ENCODE measurements at regions of chr2 and their contacts with region 1.

Region 1: DNA sequence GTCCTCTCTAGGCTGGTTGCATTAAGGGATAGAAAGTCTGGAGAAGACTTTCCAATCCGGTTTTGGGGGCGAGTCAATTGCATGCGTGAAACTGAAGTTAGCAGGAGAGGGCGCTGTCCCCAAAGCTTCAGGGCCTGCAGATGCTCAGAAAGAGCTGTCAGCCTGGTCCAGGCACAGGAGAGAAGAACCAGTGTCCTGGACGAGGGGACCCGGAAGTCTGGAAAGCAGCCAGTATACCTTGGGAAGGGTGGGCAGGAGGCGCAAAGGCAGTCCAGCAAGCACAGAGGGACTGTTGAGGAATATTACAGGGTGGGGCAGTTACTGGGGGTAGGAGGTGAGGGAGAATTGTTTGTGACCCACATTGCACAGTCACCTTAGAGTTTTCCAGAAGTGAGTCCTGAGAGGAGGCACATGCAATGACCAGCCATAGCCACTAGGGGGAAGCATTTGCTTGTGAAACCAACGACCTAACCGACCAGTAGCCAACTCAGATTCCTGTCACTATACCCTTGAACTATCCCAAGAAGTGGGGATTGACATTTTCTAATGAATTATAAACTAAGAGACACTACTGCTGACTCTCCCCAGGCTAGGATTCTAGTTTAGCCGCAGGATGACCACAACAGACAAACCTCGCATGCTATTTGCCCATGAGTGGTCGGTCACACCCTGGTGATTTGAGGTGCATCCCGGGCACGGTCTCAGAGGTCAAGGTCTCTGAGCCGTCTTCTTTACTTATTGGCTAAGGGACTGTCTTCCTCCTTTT is 172.8 kb downstream of the RDH14 start:
- DNase-seq: peak; percentile 62 to 91 (median 76)
- H3K4me3 ChIP-seq: no peak overlapping the region
- H3K27ac ChIP-seq: peak overlapping the region in 3 of 59 donors; percentile 21 to 69 (median 65)
- H3K27me3 ChIP-seq: peaks cover 0 to 3% (median 0%) of the 10 kb centered on the region in 45 donors
- CTCF ChIP-seq: peak; percentile 87 to 99 (median 95)

Region 2: GRCh38 chr2:18413676-18414396 is 26.2 kb after region 1 on chr2:
- intact Hi-C with region 1: no loop called
- DNase-seq: no peak
- H3K4me3 ChIP-seq: no peak overlapping the region
- H3K27ac ChIP-seq: no peak overlapping the region
- H3K27me3 ChIP-seq: peaks cover 0 to 5% (median 0%) of the 10 kb centered on the region in 45 donors
- CTCF ChIP-seq: no peak

Region 3: DNA sequence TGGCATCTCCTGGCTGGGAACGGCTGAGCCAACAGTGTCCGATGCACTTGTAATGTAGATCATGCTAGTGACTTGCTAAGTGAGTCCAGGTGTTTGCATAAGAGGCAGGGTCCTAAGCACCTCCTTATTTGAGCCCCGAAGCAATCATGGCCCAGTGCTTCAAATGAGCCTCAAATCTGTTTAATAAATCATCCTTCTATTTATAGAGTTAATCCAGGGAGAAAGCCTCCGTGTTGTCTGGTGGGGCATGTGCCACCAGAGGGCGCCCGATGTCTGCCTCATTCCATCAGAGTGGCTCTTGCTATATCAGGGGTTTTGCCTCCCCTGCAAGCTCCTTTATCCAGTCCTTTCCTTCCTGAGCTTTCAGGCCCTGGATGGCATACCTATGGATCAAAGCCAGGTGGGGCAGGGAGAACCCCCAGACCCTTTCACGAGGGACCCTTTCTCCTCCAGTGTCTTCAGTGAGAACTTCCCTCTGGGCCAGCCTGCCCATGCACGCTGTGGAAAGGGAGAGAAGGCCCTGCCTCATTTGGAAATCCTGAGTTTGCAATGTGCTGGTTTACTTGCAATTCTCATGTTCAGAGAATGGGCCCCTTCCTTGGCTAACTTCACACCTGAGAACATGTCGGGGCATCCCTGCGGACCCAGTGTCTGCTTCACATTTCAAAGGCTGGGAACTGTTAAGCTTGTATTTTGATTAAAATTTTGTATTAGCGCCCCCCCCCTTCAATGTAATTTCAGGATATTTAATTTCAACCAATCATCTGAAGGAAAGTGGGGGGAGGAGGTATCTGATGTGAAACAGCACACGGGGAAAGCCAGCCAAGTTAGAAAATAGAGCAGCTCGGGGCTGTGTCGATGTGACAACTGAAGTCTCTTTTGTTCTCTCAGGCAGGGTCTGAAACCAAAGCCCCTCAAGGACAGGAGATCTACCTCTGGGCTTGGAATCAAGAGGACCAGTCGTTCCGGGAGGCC is 133.1 kb after region 1 on chr2:
- intact Hi-C with region 1: loop called in 1 of 2 experiments (anchors 2 kb)
- DNase-seq: peak; percentile 70 to 90 (median 82)
- H3K4me3 ChIP-seq: peak overlapping the region in 19 of 59 donors; percentile 4 to 48 (median 19)
- H3K27ac ChIP-seq: peak overlapping the region in 1 of 59 donors; percentile 9
- H3K27me3 ChIP-seq: peaks cover 0 to 21% (median 0%) of the 10 kb centered on the region in 45 donors
- CTCF ChIP-seq: peak; percentile 75 to 95 (median 89)